ENCODE measurements at regions of chr1 and their contacts with region 1.

Region 1: GRCh38 chr1:116139592-116140134 is 28.5 kb downstream of the MAB21L3 start:
- DNase-seq: no peak
- ATAC-seq: no peak
- H3K4me3 Mint-ChIP-seq: no peak overlapping the region
- H3K27ac Mint-ChIP-seq: no peak overlapping the region
- H3K4me1 Mint-ChIP-seq: peaks cover 5% of the 10 kb centered on the region
- H3K27me3 Mint-ChIP-seq: peaks cover 8% of the 10 kb centered on the region

Region 2: GRCh38 chr1:115862403-115862802 is 277.3 kb before region 1 on chr1:
- POLR2A ChIA-PET with region 1: no interaction called
- DNase-seq: no peak
- ATAC-seq: no peak
- H3K4me3 Mint-ChIP-seq: no peak overlapping the region
- H3K27ac Mint-ChIP-seq: no peak overlapping the region
- H3K4me1 Mint-ChIP-seq: no peaks in the 10 kb centered on the region
- H3K27me3 Mint-ChIP-seq: peaks cover 15% of the 10 kb centered on the region

Region 3: GRCh38 chr1:115976062-115976920 is 163.4 kb before region 1 on chr1 and contains the start of gene SLC22A15:
- POLR2A ChIA-PET with region 1: no interaction called
- DNase-seq: peak; percentile 70
- ATAC-seq: peak; percentile 79
- H3K4me3 Mint-ChIP-seq: peak within 1 kb of the TSS; percentile 92
- H3K27ac Mint-ChIP-seq: peak within 1 kb of the TSS; percentile 79
- H3K4me1 Mint-ChIP-seq: peaks cover 11% of the 10 kb centered on the region
- H3K27me3 Mint-ChIP-seq: peaks cover 48% of the 10 kb centered on the region
- total RNA-seq, gene SLC22A15: 1.4 to 1.6 TPM

Region 4: DNA sequence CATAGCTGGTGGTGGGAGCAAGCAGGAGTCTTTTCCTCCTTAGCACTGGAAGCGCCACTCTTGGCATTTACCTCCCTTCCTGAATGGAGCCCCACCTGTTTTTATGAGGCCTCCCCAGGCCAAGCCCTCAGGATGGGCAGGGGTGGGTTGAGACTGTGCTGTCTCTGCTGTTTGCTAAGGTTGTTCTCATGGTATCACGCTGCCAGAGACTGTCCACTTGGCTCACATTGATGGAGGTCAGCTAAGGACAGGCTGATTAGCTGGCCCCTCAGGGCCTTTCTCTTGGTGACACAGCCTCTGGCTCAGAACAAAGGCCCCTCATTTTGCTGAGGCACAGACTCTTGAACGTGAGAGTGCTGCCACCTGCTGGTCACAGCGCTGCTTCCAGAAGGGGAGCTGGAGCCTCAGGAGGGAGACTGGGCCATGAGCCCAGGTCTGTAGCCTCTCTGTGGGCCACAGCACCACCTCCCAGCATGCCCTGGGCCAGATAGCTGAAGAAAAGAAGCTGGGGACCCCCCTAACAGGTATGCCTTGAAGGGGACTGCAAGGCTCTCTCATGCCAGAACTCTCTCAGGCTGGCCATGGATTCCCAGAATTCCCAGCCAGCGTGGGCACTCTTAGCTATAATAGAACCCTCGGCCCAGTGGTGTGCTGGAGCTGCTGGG is 345.5 kb after region 1 on chr1:
- POLR2A ChIA-PET with region 1: interaction called, 22 read pairs
- DNase-seq: peak; percentile 89
- ATAC-seq: peak; percentile 91
- H3K4me3 Mint-ChIP-seq: no peak overlapping the region
- H3K27ac Mint-ChIP-seq: no peak overlapping the region
- H3K4me1 Mint-ChIP-seq: peaks cover 6% of the 10 kb centered on the region
- H3K27me3 Mint-ChIP-seq: peaks cover 13% of the 10 kb centered on the region

Region 5: GRCh38 chr1:116498789-116499628 is 359.3 kb after region 1 on chr1:
- POLR2A ChIA-PET with region 1: interaction called, 28 read pairs
- DNase-seq: peak; percentile 46
- ATAC-seq: peak; percentile 68
- H3K4me3 Mint-ChIP-seq: peak overlapping the region; percentile 11
- H3K27ac Mint-ChIP-seq: no peak overlapping the region
- H3K4me1 Mint-ChIP-seq: peaks cover 41% of the 10 kb centered on the region
- H3K27me3 Mint-ChIP-seq: no peaks in the 10 kb centered on the region

Measured in activated naive CD8-positive, alpha-beta T cell treated with anti-CD3 and anti-CD28 coated beads, Interleukin-2, amount 10 ng/mL, durations not matched to agents 7 days and 5 days (primary cell).